Heart left ventricle (tissue), 16 donors: ENCODE measurements at regions of chr16 and their contacts with region 1.

Region 1: DNA sequence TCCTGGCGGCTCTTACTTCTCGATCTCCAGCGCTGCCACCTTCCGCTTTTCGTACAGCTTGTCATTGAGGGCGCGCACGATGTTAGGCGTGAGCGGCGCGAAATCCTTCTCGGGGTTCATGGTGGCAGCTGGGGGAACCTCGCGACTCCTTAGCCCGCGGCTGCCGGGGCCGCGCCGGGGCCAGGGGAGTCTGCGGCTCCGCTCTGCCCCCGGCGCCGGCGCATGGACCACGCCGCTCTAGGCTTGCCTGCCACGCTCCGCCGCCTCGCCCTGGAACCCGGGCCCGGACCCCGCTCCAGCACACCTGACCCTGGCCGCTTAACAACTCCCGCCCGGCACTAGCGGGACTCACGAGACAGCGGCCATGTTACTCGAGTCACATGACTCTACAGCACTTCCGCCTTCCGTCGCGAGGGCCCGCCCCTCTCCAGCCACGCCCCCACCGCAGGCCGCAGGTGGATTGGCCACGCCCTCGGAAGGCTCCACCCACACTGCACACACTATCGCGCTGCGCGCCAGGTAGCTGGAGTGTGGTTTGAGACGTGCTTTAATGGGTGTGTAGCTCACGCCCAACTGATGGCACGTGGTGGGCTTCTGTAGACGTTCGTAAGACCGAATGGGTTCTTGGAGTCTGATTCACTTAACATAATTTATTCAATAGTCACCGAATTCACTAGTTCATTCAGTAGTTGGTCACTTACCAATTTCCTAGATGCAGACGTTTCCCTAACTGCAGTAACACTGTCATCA is at the start of gene VAC14:
- DNase-seq: peak; percentile 83 to 94 (median 89)
- ATAC-seq: peak; percentile 88 to 99 (median 98)
- H3K4me3 ChIP-seq: peak within 1 kb of the TSS; percentile 79 to 98 (median 94)
- H3K27ac ChIP-seq: peak within 1 kb of the TSS in 8 of 12 donors; percentile 33 to 77 (median 59)
- H3K4me1 ChIP-seq: peaks cover 0 to 21% (median 14%) of the 10 kb centered on the region in 12 donors
- H3K27me3 ChIP-seq: no peaks in the 10 kb centered on the region
- CTCF ChIP-seq: no peak
- POLR2A ChIP-seq: peak in 1 of 2 donors; percentile 54
- total RNA-seq, gene VAC14: 13.9 to 48.0 (median 24.4) TPM

Region 2: GRCh38 chr16:71358464-71358998 is 557.6 kb after region 1 on chr16 and contains the start of gene CALB2:
- intact Hi-C with region 1: loop called in 2 of 10 experiments (anchors 5 to 10 kb)
- DNase-seq: peak; percentile 51 to 78 (median 62)
- ATAC-seq: peak; percentile 48 to 95 (median 86)
- H3K4me3 ChIP-seq: peak within 1 kb of the TSS in 9 of 12 donors; percentile 13 to 47 (median 30)
- H3K27ac ChIP-seq: no peak within 1 kb of the TSS
- H3K4me1 ChIP-seq: peaks cover 0 to 13% (median 4%) of the 10 kb centered on the region in 12 donors
- H3K27me3 ChIP-seq: peaks cover 0 to 56% (median 21%) of the 10 kb centered on the region in 9 donors
- CTCF ChIP-seq: peak; percentile 83 to 99 (median 96)
- POLR2A ChIP-seq: no peak
- total RNA-seq, gene CALB2: 0.35 to 76.2 (median 1.1) TPM in 7 of 9 donors, not detected in the others